ENCODE measurements at regions of chr11 and their contacts with region 1.

Region 1: DNA sequence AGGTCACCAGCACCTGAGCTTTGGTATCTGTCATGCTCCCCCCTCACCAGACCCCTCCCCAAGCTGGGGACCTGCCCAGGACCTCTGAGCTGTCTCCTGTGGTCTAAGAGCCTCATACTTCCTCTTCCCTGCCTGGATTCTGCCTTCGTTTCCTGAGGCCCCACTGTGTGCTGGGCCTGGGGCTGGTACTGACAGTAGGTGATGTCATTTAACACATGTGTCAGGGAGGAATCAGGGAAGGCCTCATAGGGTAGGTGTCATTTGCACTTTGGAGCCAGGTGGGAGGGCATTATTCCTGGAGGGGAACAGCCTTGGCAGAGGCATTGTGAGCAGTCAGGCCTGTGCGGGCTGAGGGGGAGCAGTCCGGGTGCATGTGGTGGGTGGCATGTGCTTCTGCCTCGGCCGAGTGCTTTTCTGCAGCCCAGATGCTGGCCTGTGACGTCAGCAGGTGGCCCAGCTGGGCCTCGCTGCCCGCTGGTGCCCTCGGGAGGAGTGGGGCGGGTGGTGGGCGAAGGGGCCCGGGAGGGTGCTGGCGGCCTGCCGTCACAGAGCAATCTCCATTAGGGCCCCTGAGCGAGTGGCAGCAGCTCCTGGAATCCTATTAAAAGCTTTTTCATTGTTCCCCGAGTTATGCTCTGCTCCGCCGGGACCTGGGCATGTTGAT is 9.1 kb downstream of the FLRT1 start:
- DNase-seq: no peak
- ATAC-seq: no peak
- H3K4me3 Mint-ChIP-seq: no peak overlapping the region
- H3K27ac Mint-ChIP-seq: no peak overlapping the region
- H3K4me1 Mint-ChIP-seq: no peaks in the 10 kb centered on the region
- H3K27me3 Mint-ChIP-seq: peaks cover 4% of the 10 kb centered on the region

Region 2: GRCh38 chr11:63974259-63975143 is 70.4 kb before region 1 on chr11 and contains the start of gene COX8A:
- CTCF ChIA-PET with region 1: no interaction called
- POLR2A ChIA-PET with region 1: no interaction called
- intact Hi-C with region 1: no loop called
- DNase-seq: peak; percentile 97
- ATAC-seq: peak; percentile 100
- H3K4me3 Mint-ChIP-seq: peak within 1 kb of the TSS; percentile 95
- H3K27ac Mint-ChIP-seq: peak within 1 kb of the TSS; percentile 97
- H3K4me1 Mint-ChIP-seq: peaks cover 20% of the 10 kb centered on the region
- H3K27me3 Mint-ChIP-seq: no peaks in the 10 kb centered on the region
- total RNA-seq, gene COX8A: 413 to 454 TPM

Region 3: GRCh38 chr11:64007629-64008282 is 37.1 kb before region 1 on chr11:
- CTCF ChIA-PET with region 1: no interaction called
- POLR2A ChIA-PET with region 1: no interaction called
- intact Hi-C with region 1: no loop called
- DNase-seq: peak; percentile 23
- ATAC-seq: peak; percentile 33
- H3K4me3 Mint-ChIP-seq: no peak overlapping the region
- H3K27ac Mint-ChIP-seq: no peak overlapping the region
- H3K4me1 Mint-ChIP-seq: peaks cover 6% of the 10 kb centered on the region
- H3K27me3 Mint-ChIP-seq: peaks cover 25% of the 10 kb centered on the region

Region 4: DNA sequence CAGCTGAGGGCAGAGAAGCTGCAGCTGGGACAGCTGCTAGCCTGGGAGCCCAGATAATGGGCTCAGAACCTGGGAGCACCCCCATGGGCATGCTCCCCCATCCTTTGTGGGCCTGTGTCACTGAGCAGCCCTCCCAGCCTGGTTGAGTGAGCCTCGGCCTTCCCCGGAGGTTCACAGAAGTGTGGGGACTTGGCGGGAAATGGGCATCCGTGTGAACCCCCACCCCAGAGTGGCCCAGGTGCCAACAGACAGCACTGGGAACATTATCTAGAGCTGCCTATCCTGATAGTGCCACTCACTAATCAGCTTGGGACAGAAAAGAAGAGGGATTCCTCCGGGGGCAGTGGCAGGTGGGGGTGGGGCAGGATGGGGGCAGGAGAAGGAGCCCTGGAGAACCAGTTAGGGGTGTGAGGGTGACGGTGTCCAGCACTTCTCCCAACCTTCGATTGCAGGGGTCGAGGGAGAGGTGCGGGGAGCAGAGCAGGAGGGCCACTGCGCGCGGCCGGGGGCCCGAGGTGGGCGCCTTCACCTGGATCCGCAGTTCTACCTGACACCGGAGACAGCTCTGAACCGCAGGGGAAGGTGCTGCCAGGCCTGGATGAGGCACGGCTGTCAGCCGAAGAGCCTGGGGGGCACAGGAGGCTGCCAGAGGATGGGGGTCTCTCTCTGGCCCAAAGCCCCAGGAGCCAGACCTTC is 24.0 kb after region 1 on chr11:
- CTCF ChIA-PET with region 1: no interaction called
- POLR2A ChIA-PET with region 1: no interaction called
- intact Hi-C with region 1: loop called in 1 of 2 experiments (anchors 1 kb)
- DNase-seq: no peak
- ATAC-seq: no peak
- H3K4me3 Mint-ChIP-seq: no peak overlapping the region
- H3K27ac Mint-ChIP-seq: no peak overlapping the region
- H3K4me1 Mint-ChIP-seq: no peaks in the 10 kb centered on the region
- H3K27me3 Mint-ChIP-seq: no peaks in the 10 kb centered on the region

Region 5: DNA sequence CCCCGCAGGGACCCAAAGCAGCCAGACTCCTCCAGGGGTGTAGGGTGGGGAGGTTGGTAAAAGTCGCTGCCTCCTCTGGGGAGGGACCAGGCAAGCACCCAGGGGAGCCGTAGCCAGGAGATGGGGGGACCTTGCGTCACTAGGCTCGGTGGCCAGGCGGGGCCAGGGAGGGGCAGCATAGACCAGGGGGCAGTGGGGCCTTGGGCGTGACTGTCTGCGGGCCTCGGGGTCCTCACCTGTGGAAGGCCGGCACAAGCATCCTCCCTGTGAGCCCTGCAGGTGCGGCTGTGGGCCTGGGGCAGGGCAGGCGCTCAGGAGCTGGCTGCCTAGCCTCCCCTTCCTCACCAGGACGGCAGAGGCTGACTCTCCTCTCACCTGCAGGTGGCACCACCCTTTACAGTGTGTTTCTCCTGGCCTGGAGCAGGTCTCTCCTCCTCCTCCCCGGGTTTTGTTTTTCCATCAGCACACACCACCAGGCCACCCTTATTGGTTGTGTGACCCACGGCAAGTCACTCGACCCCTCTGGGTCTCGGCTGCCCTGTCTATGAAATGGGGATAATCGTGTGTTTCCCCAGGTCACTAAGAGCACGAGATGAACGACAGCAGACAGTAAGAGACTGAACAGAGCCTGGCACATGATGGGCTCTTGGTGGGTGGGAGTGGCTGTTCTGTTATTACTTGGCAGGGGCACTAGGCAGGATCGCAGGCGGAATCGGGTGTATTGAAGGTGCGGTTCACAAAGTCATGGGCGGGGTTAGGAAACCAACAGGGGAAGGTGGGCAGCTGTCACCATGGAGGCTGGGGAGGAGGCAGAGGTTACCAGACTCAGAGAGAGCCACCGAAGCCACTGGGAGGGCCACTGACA is 43.5 kb after region 1 on chr11:
- CTCF ChIA-PET with region 1: no interaction called
- POLR2A ChIA-PET with region 1: no interaction called
- intact Hi-C with region 1: no loop called
- DNase-seq: peak; percentile 22
- ATAC-seq: peak; percentile 39
- H3K4me3 Mint-ChIP-seq: no peak overlapping the region
- H3K27ac Mint-ChIP-seq: no peak overlapping the region
- H3K4me1 Mint-ChIP-seq: peaks cover 3% of the 10 kb centered on the region
- H3K27me3 Mint-ChIP-seq: no peaks in the 10 kb centered on the region

Region 6: GRCh38 chr11:64156235-64157011 is 111.6 kb after region 1 on chr11:
- CTCF ChIA-PET with region 1: no interaction called
- POLR2A ChIA-PET with region 1: no interaction called
- intact Hi-C with region 1: no loop called
- DNase-seq: no peak
- ATAC-seq: no peak
- H3K4me3 Mint-ChIP-seq: no peak overlapping the region
- H3K27ac Mint-ChIP-seq: no peak overlapping the region
- H3K4me1 Mint-ChIP-seq: peaks cover 3% of the 10 kb centered on the region
- H3K27me3 Mint-ChIP-seq: no peaks in the 10 kb centered on the region

Measured in activated CD4-positive, alpha-beta T cell treated with anti-CD3 and anti-CD28 coated beads for 36 hours (primary cell).